Dendritic cell treated with granulocyte-macrophage colony-stimulating factor and Interleukin-4, amounts not matched to agents 40 ng/mL and 50 ng/mL, for 4 days (primary cell): ENCODE measurements at regions of chr14 and their contacts with region 1.

Region 1: DNA sequence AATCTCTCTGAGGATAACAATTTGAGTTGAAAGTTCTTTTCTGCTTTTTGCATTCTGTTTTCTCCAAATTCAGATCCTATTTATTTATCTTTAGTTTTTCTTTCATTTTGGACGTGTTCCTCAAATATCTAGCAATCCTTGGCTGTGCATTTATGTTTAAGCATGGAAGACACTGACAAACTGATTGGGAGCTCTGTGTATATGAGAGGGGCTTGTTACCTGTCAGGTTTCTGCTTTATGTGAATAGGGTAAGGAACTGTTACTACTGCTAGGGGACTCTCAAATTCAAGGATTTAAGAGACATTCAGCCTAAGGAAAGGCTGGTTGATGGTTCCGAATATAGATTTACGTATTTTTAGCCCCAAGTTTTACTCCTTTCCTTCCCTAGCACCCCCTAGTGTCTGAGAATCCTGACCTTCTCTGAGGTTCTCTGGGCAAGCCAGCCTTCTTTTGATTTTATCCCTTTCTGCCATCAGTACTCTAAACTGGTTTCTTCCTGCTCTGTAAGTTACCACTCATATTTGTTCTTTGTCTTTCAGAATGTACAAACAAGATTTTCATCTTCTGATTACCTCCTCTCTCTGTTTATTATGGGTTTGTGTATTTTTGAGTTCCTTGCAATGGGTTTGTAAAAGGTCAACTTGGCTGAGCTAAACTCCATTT is 30.5 kb downstream of the YLPM1 start:
- H3K4me3 Mint-ChIP-seq: no peak overlapping the region
- H3K27ac Mint-ChIP-seq: no peak overlapping the region
- H3K4me1 Mint-ChIP-seq: peaks cover 18% of the 10 kb centered on the region
- H3K27me3 Mint-ChIP-seq: no peaks in the 10 kb centered on the region

Region 2: GRCh38 chr14:74362361-74362915 is 431.2 kb before region 1 on chr14:
- intact Hi-C with region 1: loop called (anchors 5 kb)
- H3K4me3 Mint-ChIP-seq: no peak overlapping the region
- H3K27ac Mint-ChIP-seq: no peak overlapping the region
- H3K4me1 Mint-ChIP-seq: peaks cover 5% of the 10 kb centered on the region
- H3K27me3 Mint-ChIP-seq: peaks cover 19% of the 10 kb centered on the region